ENCODE measurements at regions of chr19 and their contacts with region 1.

Region 1: GRCh38 chr19:6048808-6049405 is 61.4 kb downstream of the RFX2 start:
- DNase-seq: peak; percentile 93
- H3K4me3 Mint-ChIP-seq: no peak overlapping the region
- H3K27ac Mint-ChIP-seq: no peak overlapping the region
- H3K4me1 Mint-ChIP-seq: peaks cover 4% of the 10 kb centered on the region
- H3K27me3 Mint-ChIP-seq: peaks cover 7% of the 10 kb centered on the region

Region 2: GRCh38 chr19:6125571-6125989 is 76.7 kb after region 1 on chr19:
- intact Hi-C with region 1: loop called (anchors 1 kb)
- DNase-seq: peak; percentile 88
- H3K4me3 Mint-ChIP-seq: no peak overlapping the region
- H3K27ac Mint-ChIP-seq: no peak overlapping the region
- H3K4me1 Mint-ChIP-seq: peaks cover 7% of the 10 kb centered on the region
- H3K27me3 Mint-ChIP-seq: peaks cover 2% of the 10 kb centered on the region

Region 3: GRCh38 chr19:6218491-6219162 is 169.7 kb after region 1 on chr19:
- intact Hi-C with region 1: no loop called
- DNase-seq: peak; percentile 95
- H3K4me3 Mint-ChIP-seq: no peak overlapping the region
- H3K27ac Mint-ChIP-seq: no peak overlapping the region
- H3K4me1 Mint-ChIP-seq: peaks cover 2% of the 10 kb centered on the region
- H3K27me3 Mint-ChIP-seq: no peaks in the 10 kb centered on the region